ENCODE measurements at regions of chr18 and their contacts with region 1.

Region 1: GRCh38 chr18:11994699-11995444 is 13.6 kb downstream of the IMPA2 start:
- DNase-seq: no peak
- ATAC-seq: peak; percentile 1

Region 2: GRCh38 chr18:11500153-11501122 is 494.4 kb before region 1 on chr18:
- intact Hi-C with region 1: no loop called
- DNase-seq: no peak
- ATAC-seq: no peak

Region 3: DNA sequence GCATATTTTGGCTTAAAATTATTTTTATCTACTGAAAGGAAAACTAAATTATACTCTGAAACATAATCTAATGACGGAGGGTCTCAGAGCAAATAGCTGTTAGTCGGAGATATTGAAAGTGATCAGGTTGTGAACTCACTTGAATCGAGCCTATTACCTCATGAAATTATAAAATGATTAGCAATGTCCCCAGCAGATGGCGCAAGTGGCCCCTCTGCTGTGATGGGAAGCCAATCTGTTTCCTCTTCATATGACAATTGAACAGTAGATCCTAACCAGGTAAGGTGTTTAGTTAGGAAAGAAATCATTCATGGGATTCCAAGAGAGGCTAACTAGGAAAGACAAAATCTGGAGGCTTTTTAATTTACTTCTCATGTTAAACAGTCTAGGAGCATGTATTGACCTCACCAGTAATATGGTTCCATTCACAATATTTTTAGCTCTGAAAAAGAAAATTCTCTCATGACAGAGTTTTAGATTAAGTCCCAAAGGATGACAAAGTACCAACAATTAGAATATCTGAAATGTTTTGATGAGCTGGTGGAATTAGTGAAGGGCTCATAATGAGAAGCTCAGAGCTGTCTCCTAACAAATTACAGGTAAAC is 56.9 kb before region 1 on chr18:
- intact Hi-C with region 1: loop called (anchors 5 kb)
- DNase-seq: peak; percentile 83
- ATAC-seq: peak; percentile 94